Activated CD4-positive, alpha-beta memory T cell treated with anti-CD3 and anti-CD28 coated beads for 36 hours (primary cell): ENCODE measurements at regions of chr1 and their contacts with region 1.

Region 1: DNA sequence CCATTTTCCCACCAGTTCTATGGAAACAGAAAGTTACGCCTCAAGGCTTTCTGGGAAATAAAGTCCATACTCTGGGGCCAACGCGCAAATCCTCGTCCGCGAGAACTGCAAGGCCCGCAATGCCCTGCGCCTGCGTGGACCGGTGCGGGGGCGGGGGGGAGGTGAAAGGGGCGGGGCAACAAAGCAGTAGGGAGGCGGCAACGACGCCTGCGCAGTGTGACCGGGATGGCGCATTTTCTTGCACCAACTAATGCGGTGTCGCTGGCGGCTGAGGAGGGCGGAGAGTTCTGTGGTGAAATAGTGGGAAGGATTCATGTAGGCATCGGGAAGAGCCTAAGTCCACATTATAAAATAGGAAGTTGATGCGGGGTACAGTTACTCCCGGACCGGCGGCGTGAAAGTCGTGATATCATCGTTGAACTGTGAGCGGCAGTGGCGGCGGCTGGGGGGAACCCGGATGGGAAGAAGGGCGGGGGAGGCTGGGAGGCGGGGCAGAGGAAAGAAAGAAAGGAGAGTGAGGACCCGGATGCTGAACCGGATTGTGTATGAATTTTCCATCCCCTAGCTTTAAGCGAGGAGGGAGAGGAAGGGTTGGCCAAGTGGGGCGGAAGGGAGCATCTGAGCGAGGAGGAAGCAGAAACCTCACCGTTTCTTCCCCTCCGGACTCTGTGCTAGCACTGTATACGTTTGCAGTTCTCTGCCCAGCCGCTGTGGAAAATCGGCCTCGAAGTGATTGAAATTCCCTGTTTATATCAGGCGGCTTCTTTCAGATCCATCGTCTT is at the start of gene GGPS1:
- DNase-seq: peak; percentile 100
- H3K4me3 Mint-ChIP-seq: no peak within 1 kb of the TSS
- H3K27ac Mint-ChIP-seq: no peak within 1 kb of the TSS
- H3K4me1 Mint-ChIP-seq: peaks cover 42% of the 10 kb centered on the region
- H3K27me3 Mint-ChIP-seq: no peaks in the 10 kb centered on the region
- total RNA-seq, gene GGPS1: 36.1 to 37.5 TPM

Region 2: DNA sequence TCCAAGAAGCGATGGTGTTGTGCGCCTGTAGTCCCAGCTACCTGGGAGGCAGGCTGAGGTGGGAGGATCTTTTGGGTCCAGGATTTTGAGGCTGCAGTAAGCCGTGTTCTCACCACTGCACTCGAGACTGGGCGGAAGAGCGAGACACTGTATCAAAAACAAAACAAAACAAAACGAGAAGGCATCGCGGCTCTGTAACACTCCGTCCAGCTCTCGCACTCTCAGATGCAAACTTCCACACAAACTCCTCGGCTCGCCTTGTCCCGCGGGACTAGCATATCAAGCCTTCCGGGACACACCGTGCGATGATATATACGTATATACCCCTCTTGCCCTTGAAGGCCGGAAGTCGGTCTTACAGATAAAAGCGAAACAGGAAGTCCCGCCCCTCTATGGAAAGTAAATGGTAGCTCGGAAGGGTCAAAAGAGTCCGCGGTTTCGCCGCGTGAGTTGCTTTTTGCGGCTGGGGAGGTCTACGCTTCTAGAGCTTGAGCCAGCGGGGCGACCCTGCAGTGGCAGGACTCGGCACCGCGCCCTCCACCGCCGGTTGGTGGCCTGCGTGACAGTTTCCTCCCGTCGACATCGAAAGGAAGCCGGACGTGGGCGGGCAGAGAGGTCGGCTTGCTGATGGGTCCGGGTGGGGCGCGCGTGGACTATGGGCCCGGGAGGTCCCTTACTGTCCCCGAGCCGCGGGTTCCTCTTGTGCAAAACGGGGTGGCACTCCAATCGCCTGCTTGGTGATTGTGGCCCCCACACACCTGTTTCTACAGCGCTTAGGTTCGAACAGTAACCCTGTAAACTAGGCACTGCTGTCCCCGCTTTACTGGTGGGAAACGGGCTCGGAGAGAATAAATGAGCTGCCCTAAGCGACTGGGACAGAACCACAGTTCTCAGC is 955.2 kb before region 1 on chr1 and contains the start of gene COA6:
- CTCF ChIA-PET with region 1: no interaction called
- POLR2A ChIA-PET with region 1: no interaction called
- intact Hi-C with region 1: loop called (anchors 2 kb)
- DNase-seq: peak; percentile 92
- H3K4me3 Mint-ChIP-seq: peak within 1 kb of the TSS; percentile 97
- H3K27ac Mint-ChIP-seq: peak within 1 kb of the TSS; percentile 100
- H3K4me1 Mint-ChIP-seq: peaks cover 60% of the 10 kb centered on the region
- H3K27me3 Mint-ChIP-seq: no peaks in the 10 kb centered on the region
- total RNA-seq, gene COA6: 57.7 to 58.5 TPM

Region 3: DNA sequence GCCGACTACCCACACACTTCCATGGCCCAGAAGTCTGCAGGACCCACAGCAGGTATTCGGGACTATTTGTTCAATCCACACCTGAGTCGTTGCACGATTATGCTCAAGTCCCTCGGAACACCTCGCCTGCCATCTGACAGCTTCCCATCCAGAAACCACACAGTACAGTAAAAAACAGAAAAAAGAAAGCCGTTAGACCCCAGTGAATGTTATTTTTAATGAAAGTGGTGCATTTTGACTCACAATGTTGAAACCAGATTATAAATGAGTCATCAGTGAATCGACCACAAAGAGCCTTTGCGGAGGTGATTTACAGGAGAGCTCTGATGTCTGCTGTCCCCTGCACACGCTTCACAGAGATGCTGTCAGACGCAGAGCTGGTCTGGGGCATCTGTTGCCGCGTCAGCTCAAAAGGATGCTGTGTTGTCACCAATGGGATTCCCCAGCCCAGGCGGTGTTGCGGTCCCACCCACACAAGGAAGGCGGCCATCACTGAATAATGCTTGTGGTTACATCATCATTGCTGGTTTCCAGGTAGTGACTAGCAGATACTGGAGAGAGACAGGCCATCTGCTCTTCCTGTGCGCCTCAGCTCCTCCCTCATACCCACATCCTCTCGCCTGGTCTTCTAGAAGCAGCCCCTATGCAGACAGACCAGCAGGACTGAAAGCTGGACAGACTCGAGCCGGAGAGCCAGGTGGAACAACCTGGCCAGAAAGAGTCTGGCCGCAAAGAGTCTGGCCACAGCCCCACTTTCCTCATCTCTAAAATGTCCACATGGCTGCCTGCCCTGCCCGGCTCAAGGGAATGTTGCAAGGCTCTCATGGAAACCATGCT is 316.7 kb before region 1 on chr1:
- CTCF ChIA-PET with region 1: no interaction called
- POLR2A ChIA-PET with region 1: no interaction called
- intact Hi-C with region 1: loop called (anchors 2 kb)
- DNase-seq: peak; percentile 99
- H3K4me3 Mint-ChIP-seq: peak overlapping the region; percentile 56
- H3K27ac Mint-ChIP-seq: peak overlapping the region; percentile 97
- H3K4me1 Mint-ChIP-seq: peaks cover 90% of the 10 kb centered on the region
- H3K27me3 Mint-ChIP-seq: peaks cover 2% of the 10 kb centered on the region

Region 4: GRCh38 chr1:235160957-235161684 is 167.4 kb before region 1 on chr1 and contains the start of gene RBM34:
- CTCF ChIA-PET with region 1: no interaction called
- POLR2A ChIA-PET with region 1: interaction called, 5 read pairs
- intact Hi-C with region 1: loop called (anchors 1 kb)
- DNase-seq: peak; percentile 96
- H3K4me3 Mint-ChIP-seq: peak within 1 kb of the TSS; percentile 95
- H3K27ac Mint-ChIP-seq: peak within 1 kb of the TSS; percentile 98
- H3K4me1 Mint-ChIP-seq: peaks cover 15% of the 10 kb centered on the region
- H3K27me3 Mint-ChIP-seq: no peaks in the 10 kb centered on the region
- total RNA-seq, gene RBM34: 108 to 120 TPM

Region 5: DNA sequence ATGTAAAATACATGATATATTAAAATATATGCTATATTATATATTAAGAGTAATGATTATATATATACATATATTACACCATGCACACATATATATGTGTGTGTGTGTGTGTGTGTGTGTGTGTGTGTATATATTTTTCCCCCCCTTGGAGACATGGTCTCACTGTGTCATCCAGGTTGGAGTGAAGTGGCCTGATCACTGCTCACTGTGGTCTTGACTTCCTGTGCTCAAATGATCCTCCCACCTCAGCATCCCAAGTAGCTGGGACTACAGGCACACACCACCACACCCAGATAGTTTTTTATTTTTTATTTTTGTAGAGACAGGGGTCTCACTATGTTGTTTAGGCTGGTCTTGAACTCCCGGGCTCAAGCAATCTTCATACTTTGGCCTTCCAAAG is 113.1 kb before region 1 on chr1:
- CTCF ChIA-PET with region 1: no interaction called
- POLR2A ChIA-PET with region 1: no interaction called
- intact Hi-C with region 1: no loop called
- DNase-seq: no peak
- H3K4me3 Mint-ChIP-seq: no peak overlapping the region
- H3K27ac Mint-ChIP-seq: no peak overlapping the region
- H3K4me1 Mint-ChIP-seq: peaks cover 27% of the 10 kb centered on the region
- H3K27me3 Mint-ChIP-seq: no peaks in the 10 kb centered on the region

Region 6: GRCh38 chr1:235297579-235297978 is 31.0 kb before region 1 on chr1:
- CTCF ChIA-PET with region 1: no interaction called
- POLR2A ChIA-PET with region 1: interaction called, 3 read pairs
- intact Hi-C with region 1: loop called (anchors 1 kb)
- DNase-seq: no peak
- H3K4me3 Mint-ChIP-seq: peak overlapping the region; percentile 66
- H3K27ac Mint-ChIP-seq: peak overlapping the region; percentile 79
- H3K4me1 Mint-ChIP-seq: peaks cover 53% of the 10 kb centered on the region
- H3K27me3 Mint-ChIP-seq: no peaks in the 10 kb centered on the region

Region 7: DNA sequence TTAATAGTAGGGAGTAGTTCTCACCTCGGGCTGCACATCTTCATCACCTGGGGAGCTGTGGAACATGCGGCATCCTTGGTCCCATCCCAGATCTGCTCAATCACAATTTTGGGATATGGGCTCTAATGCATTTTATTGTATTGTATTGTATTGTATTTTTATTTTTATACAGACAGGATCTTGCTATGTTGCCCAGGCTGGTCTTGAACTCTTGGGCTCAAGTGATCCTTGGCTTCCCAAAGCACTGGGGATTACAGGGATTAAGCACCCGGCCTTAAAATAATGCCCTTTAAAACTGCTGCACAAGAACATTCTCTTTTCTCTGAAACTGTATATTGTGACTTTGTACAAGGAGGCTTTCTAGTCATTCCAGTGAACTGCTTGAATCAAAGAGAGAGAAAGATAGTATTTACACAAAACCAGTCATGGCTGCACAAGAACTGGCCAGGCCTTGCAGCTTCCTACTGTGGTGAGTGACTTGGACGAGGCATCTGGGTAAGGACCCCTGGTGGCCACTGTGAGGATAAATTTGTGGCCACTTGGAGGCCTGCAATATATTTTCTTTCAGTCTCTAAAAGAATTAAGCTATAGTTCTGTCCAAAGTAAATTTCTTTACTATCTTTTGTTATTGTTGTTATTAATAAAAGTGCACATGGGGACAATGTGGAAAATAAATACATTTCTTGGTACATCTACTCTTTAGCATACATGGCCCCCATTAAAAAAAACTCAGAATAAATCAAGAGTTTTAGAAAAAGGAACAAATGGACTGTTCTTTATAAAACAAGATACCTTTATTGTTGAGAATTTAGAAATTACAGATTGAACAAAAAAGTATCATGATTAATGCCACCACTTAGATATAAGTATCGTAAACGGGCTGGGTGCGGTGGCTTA is 86.7 kb after region 1 on chr1:
- CTCF ChIA-PET with region 1: interaction called, 31 read pairs
- POLR2A ChIA-PET with region 1: no interaction called
- intact Hi-C with region 1: loop called (anchors 1 kb)
- DNase-seq: peak; percentile 74
- H3K4me3 Mint-ChIP-seq: no peak overlapping the region
- H3K27ac Mint-ChIP-seq: no peak overlapping the region
- H3K4me1 Mint-ChIP-seq: peaks cover 2% of the 10 kb centered on the region
- H3K27me3 Mint-ChIP-seq: no peaks in the 10 kb centered on the region